ENCODE measurements at regions of chr9 and their contacts with region 1.

Region 1: GRCh38 chr9:72871685-72872084 is 81.2 kb downstream of the ALDH1A1 start:
- DNase-seq: peak; percentile 1
- ATAC-seq: peak; percentile 37; the same call in 1 of the 2 replicates
- H3K4me3 ChIP-seq: no peak overlapping the region
- H3K27ac ChIP-seq: no peak overlapping the region
- H3K4me1 ChIP-seq: no peaks in the 10 kb centered on the region
- H3K27me3 ChIP-seq: no peaks in the 10 kb centered on the region
- CTCF ChIP-seq: peak; percentile 38; the same call in 1 of the 2 replicates
- POLR2A ChIP-seq: no peak
- RAD21 ChIP-seq: peak; percentile 41; the same call in 1 of the 2 replicates

Region 2: DNA sequence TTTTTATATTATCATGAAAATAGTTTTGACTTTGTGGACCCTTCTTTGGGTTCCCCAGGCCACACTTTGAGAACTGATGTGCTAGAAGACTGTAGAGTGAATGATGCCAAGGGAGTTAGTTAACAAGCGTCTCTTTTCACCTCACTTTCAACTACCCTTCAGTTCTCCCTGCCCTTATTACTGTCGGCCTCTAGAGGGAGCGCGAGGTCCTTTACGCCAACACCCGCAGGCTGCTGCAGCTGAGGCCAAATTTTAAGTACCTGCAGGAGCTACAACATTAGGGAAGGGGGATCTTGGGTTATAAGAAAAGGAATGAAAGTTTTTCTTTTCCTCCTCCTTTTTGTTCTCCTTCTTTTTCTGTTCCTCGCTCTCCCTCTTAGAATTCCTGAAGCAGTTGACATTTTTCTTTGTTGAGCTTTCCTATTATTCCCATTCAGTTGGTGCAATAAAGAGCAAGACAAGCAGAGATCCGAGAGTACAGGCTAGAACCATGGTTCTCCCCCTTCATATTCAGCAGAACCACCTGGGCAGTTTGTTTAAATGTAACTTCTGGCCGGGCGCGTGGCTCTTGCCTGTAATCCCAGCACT is 590.7 kb before region 1 on chr9:
- CTCF ChIA-PET with region 1: no interaction called
- POLR2A ChIA-PET with region 1: no interaction called
- dilution Hi-C with region 1: no loop called
- in situ Hi-C with region 1: no loop called
- intact Hi-C with region 1: no loop called
- DNase-seq: peak; percentile 59
- ATAC-seq: peak; percentile 96
- H3K4me3 ChIP-seq: no peak overlapping the region
- H3K27ac ChIP-seq: no peak overlapping the region
- H3K4me1 ChIP-seq: no peaks in the 10 kb centered on the region
- H3K27me3 ChIP-seq: peaks cover 21% of the 10 kb centered on the region
- CTCF ChIP-seq: peak; percentile 94
- POLR2A ChIP-seq: no peak
- RAD21 ChIP-seq: peak; percentile 95

Region 3: DNA sequence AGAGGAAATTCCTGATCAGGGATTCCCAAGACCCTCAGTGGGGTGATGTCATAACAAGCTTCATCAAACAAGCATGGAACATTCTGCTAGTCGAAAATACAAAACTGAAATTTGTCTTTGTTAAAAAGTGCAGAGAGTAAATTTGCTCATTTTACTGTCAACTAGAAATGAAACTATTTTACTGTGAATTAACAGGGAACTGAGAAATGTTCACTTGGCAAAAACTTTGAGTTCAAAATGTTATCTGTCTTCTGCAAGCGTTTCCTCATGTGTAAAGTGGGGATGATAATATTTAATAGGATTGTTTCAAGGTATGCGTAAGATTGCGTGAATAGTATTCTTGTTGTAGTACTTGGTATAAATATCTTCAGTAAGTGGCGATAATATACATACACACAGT is 35.7 kb after region 1 on chr9:
- CTCF ChIA-PET with region 1: no interaction called
- POLR2A ChIA-PET with region 1: no interaction called
- dilution Hi-C with region 1: no loop called
- in situ Hi-C with region 1: no loop called
- intact Hi-C with region 1: loop called (anchors 5 kb)
- DNase-seq: no peak
- ATAC-seq: no peak
- H3K4me3 ChIP-seq: no peak overlapping the region
- H3K27ac ChIP-seq: no peak overlapping the region
- H3K4me1 ChIP-seq: no peaks in the 10 kb centered on the region
- H3K27me3 ChIP-seq: no peaks in the 10 kb centered on the region
- CTCF ChIP-seq: no peak
- POLR2A ChIP-seq: no peak
- RAD21 ChIP-seq: no peak

Region 4: GRCh38 chr9:73023025-73023541 is 151.4 kb after region 1 on chr9:
- CTCF ChIA-PET with region 1: no interaction called
- POLR2A ChIA-PET with region 1: no interaction called
- dilution Hi-C with region 1: no loop called
- in situ Hi-C with region 1: no loop called
- intact Hi-C with region 1: loop called (anchors 1 kb)
- DNase-seq: peak; percentile 63
- ATAC-seq: peak; percentile 74
- H3K4me3 ChIP-seq: no peak overlapping the region
- H3K27ac ChIP-seq: no peak overlapping the region
- H3K4me1 ChIP-seq: no peaks in the 10 kb centered on the region
- H3K27me3 ChIP-seq: no peaks in the 10 kb centered on the region
- CTCF ChIP-seq: peak; percentile 82
- POLR2A ChIP-seq: no peak
- RAD21 ChIP-seq: peak; percentile 65

Region 5: GRCh38 chr9:73081979-73082657 is 210.4 kb after region 1 on chr9:
- CTCF ChIA-PET with region 1: no interaction called
- POLR2A ChIA-PET with region 1: no interaction called
- dilution Hi-C with region 1: no loop called
- in situ Hi-C with region 1: no loop called
- intact Hi-C with region 1: loop called (anchors 1 kb)
- DNase-seq: peak; percentile 27
- ATAC-seq: peak; percentile 82
- H3K4me3 ChIP-seq: no peak overlapping the region
- H3K27ac ChIP-seq: no peak overlapping the region
- H3K4me1 ChIP-seq: no peaks in the 10 kb centered on the region
- H3K27me3 ChIP-seq: no peaks in the 10 kb centered on the region; the same call in 1 of the 2 replicates
- CTCF ChIP-seq: peak; percentile 69
- POLR2A ChIP-seq: no peak
- RAD21 ChIP-seq: peak; percentile 63

Region 6: GRCh38 chr9:73183917-73184861 is 312.5 kb after region 1 on chr9:
- CTCF ChIA-PET with region 1: no interaction called
- POLR2A ChIA-PET with region 1: no interaction called
- dilution Hi-C with region 1: no loop called
- in situ Hi-C with region 1: no loop called
- intact Hi-C with region 1: loop called (anchors 5 kb)
- DNase-seq: peak; percentile 65
- ATAC-seq: peak; percentile 32
- H3K4me3 ChIP-seq: no peak overlapping the region
- H3K27ac ChIP-seq: no peak overlapping the region
- H3K4me1 ChIP-seq: 0 out of 2 replicates have a peak, but pooled peaks cover 1% of the 10 kb centered on the region
- H3K27me3 ChIP-seq: peaks cover 3% of the 10 kb centered on the region; the same call in 1 of the 2 replicates
- CTCF ChIP-seq: peak; percentile 63
- POLR2A ChIP-seq: no peak
- RAD21 ChIP-seq: peak; percentile 73